ENCODE measurements at regions of chr3 and their contacts with region 1.

Region 1: DNA sequence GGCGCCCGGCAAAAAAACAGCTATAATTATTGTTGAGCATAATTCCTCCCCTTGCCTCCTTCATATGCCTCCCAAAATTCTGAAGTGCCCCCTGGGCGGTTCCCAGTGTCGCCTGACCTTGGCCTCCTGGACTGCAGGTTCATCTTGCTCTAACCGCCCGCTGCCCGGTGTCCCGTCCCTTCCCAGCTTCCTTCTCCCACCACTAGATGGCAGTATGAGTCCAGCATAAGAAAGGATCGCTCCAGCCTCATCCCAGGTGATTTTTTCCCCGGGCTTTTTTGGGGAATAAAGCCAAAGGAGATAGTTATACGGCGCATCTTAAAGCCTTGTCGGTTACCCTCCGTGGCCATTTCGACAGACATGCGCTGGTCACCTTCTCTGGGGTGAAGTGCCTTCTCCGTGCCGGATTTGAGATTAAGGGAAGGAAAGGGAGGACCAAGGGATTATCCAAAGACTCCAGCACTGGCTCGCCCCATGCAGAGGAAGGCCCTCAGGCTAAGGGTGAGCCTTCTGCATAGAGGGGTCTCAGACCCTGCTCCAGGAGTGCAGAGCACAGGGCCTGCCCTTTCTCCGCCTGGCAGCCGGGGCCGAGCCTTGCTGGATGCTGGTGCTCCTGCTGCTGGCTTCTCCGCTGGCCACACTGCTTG is 45.8 kb upstream of the TRA2B start:
- DNase-seq: peak; percentile 90
- H3K4me3 ChIP-seq: peak overlapping the region in 1 of 2 donors; percentile 38
- H3K27ac ChIP-seq: no peak overlapping the region
- H3K4me1 ChIP-seq: peaks cover 5% of the 10 kb centered on the region
- H3K27me3 ChIP-seq: no peaks in the 10 kb centered on the region
- CTCF ChIP-seq: peak; percentile 87 to 88 (median 88)
- POLR2A ChIP-seq: no peak

Region 2: DNA sequence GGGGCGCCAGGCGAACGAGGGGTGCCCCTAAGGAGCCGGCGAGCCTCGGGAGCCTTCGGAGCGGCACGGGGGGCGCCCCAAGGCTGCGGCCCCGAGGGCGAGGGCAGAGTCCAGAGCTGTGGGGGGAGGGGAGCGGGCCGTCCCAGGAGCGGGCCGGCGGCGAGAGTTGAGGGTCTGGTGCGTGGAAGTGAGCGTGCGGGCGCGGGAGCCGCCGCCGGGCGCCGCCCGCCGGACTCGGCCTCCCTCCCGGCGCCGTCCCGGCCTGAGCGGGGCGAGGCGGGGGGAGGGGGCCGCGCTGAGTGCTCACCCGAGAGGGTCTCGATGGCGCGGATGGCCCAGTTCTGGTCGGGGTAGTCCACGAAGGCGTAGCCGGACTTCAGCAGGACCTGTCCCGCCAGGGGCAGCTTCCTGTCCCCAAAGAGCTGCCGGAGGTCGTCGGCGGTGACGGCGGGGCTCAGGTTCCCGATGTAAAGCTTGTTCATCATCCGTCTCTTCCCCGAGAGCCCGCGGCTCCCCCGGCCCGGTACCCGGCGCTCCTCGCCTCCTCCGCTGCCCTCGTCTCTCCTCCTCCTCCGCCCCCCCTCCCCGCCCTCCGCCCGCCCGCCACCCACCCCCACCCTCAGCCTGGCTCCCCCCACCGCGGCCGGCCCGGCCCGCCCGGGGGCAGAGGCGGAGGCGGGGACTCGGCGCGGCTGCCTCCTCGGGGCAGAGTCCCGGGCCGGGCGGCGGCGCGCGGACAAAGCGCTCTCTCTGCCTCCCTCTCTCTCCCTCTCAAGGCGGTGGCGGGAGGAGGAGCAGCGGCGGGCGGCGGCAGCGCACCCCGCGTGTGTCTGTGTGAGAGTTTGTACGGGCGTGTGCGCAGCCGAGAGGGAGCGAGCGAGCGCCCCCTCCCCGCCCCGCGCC is 158.9 kb before region 1 on chr3 and contains the start of gene IGF2BP2:
- intact Hi-C with region 1: no loop called
- DNase-seq: peak; percentile 25
- H3K4me3 ChIP-seq: peak within 1 kb of the TSS; percentile 49 to 63
- H3K27ac ChIP-seq: peak within 1 kb of the TSS; percentile 58 to 70
- H3K4me1 ChIP-seq: peaks cover 8% of the 10 kb centered on the region
- H3K27me3 ChIP-seq: no peaks in the 10 kb centered on the region
- CTCF ChIP-seq: no peak
- POLR2A ChIP-seq: no peak
- total RNA-seq, gene IGF2BP2: 19.4 to 29.1 TPM

Region 3: DNA sequence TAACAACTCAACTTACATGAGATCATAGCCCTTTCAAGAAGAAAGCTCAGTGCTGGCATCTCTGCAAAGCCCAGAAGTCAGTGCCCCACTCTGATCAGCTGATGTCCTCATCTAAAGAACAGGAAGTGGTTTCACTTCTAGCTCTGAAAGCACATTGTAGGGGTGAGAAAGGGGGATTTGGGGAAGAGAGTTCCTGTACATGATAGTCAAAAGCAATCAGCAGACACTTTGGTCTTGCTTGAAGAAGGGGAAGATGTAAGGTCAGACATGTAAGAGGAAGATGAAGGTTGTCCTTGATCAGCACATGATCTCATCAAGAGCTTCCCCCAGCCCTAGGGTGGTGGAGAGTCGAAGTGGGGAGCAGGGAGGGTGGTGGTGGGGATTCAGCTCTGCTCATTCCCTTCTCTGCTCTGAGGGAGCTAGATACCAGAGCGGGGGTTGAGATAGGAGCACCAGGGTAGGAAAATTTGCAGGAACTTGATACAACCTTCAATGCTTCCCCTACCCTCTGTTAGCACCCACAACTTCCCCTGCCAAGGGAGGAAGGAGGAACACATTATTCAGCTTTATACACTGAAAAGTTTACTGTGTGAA is 201.7 kb after region 1 on chr3:
- intact Hi-C with region 1: no loop called
- DNase-seq: peak; percentile 17
- H3K4me3 ChIP-seq: no peak overlapping the region
- H3K27ac ChIP-seq: no peak overlapping the region
- H3K4me1 ChIP-seq: no peaks in the 10 kb centered on the region
- H3K27me3 ChIP-seq: no peaks in the 10 kb centered on the region
- CTCF ChIP-seq: no peak
- POLR2A ChIP-seq: no peak

Region 4: GRCh38 chr3:186241910-186242821 is 258.5 kb after region 1 on chr3:
- intact Hi-C with region 1: loop called (anchors 10 kb)
- DNase-seq: peak; percentile 77
- H3K4me3 ChIP-seq: no peak overlapping the region
- H3K27ac ChIP-seq: no peak overlapping the region
- H3K4me1 ChIP-seq: no peaks in the 10 kb centered on the region
- H3K27me3 ChIP-seq: no peaks in the 10 kb centered on the region
- CTCF ChIP-seq: peak; percentile 26 to 51 (median 35)
- POLR2A ChIP-seq: no peak

Region 5: DNA sequence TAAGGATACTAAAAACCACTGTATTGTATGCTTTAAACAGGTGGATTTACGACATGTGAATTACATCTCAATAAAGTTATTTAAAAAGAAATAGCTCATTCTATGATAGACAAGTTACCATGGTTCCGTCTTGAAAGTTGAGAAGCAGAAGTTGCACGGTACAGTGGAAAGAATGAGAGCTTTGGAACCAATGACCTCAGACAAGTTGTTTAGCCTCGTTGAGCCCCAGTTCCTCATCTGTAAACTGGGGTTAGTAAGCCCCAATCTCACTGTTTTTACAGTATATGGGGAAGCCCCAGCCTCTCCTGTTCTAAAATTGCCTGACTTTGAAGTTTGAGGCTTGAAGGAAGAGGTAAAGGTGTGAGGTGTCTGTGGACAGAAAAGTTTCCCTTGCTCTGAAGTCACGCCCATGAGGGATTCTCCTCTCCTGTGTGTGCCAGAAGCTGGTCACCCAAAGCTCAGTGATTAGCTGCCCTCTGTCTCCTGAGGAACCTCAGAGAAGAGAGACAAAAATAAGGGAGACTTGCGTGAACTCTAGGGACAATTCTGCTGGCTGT is 550.6 kb after region 1 on chr3:
- intact Hi-C with region 1: loop called (anchors 10 kb)
- DNase-seq: no peak
- H3K4me3 ChIP-seq: no peak overlapping the region
- H3K27ac ChIP-seq: no peak overlapping the region
- H3K4me1 ChIP-seq: no peaks in the 10 kb centered on the region
- H3K27me3 ChIP-seq: no peaks in the 10 kb centered on the region
- CTCF ChIP-seq: no peak
- POLR2A ChIP-seq: no peak

Measured in testis (tissue), 5 donors.